ENCODE measurements at regions of chr1 and their contacts with region 1.

Region 1: GRCh38 chr1:40774266-40774998 is 9.2 kb upstream of the KCNQ4 start:
- DNase-seq: no peak
- H3K4me3 ChIP-seq: no peak overlapping the region
- CTCF ChIP-seq: peak; percentile 75

Region 2: GRCh38 chr1:40748841-40749718 is 25.4 kb before region 1 on chr1:
- CTCF ChIA-PET with region 1: interaction called, 62 read pairs
- POLR2A ChIA-PET with region 1: no interaction called
- DNase-seq: no peak
- H3K4me3 ChIP-seq: no peak overlapping the region
- CTCF ChIP-seq: no peak

Region 3: GRCh38 chr1:40755067-40755466 is 19.4 kb before region 1 on chr1:
- CTCF ChIA-PET with region 1: interaction called, 62 read pairs
- POLR2A ChIA-PET with region 1: no interaction called
- DNase-seq: no peak
- H3K4me3 ChIP-seq: no peak overlapping the region
- CTCF ChIP-seq: no peak

Region 4: DNA sequence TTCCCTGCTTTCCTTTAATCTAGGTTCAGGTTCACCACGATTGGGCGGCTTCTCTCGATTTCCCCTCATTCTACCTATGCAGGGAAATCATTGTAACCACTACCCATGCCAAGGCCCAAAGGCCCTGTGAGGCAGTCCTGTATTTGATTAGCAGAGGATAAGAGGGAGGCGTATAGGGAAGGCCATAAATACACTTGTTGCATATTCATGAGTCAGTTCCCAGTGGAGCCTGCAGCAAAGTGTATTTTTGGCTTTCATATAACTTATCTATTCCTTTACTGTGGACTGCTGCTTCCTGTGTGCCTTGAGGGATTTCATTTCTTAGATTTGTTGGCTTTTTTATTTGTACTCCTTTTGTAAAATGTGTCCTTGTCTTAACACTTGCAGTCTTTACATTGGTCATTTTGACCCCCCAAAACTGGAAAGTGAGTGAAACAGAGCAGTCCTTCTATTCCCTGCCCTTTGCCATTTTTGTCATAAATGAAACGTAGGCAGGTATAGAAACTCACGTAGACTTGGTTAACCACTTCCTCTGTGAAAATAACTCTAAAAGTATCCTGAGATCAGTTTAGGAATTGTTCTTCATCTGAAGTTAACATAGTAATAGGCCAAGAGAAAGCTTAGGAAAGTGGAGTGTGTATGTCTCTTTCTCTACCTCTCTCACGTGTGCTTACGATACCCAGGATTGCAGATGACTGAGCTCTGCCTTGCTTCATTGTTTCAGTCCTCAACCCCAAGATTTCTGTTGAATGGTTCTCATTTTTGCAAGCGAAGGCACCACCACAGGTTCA is 10.5 kb before region 1 on chr1:
- CTCF ChIA-PET with region 1: interaction called, 65 read pairs
- POLR2A ChIA-PET with region 1: no interaction called
- DNase-seq: no peak
- H3K4me3 ChIP-seq: no peak overlapping the region
- CTCF ChIP-seq: no peak

Region 5: GRCh38 chr1:40806731-40807695 is 32.6 kb after region 1 on chr1:
- CTCF ChIA-PET with region 1: interaction called, 11 read pairs
- POLR2A ChIA-PET with region 1: no interaction called
- DNase-seq: no peak
- H3K4me3 ChIP-seq: no peak overlapping the region
- CTCF ChIP-seq: no peak

Region 6: GRCh38 chr1:41023279-41023990 is 249.0 kb after region 1 on chr1:
- CTCF ChIA-PET with region 1: no interaction called
- POLR2A ChIA-PET with region 1: no interaction called
- DNase-seq: no peak
- H3K4me3 ChIP-seq: no peak overlapping the region
- CTCF ChIP-seq: peak; percentile 59

Measured in AG04449 (cell line).